HCT116 (cell line): ENCODE measurements at regions of chr5 and their contacts with region 1.

Region 1: DNA sequence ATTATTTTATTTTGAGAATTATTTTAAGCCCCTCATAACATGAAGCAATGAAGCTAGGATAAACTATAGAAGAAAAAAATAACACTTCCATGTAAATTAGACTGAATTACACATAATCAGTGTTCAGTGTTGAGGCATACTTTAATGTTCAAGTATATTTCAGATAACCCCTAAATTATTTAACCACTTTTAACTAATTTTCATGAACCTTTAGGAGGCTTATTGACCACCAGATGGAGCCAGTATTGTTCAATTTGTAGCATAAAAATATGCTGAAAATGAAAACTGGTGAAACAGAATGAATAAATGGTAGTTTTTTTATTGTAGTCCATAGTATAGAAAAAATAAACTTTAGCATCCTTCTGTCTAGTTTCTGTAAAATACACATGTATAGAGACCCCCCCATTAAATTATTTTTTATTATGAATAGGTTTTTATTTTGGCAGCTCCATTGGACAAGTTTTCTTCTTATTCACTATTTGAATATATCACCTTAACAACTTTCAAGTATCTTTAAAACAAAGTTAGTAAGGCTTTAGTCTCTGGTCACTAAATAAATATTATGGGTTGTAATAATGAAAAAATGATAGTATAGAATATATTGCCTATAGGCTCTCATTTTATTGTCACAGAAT is 190.1 kb downstream of the CWC27 start:
- DNase-seq: peak; percentile 7
- ATAC-seq: no peak
- H3K4me3 ChIP-seq: no peak overlapping the region
- H3K27ac ChIP-seq: no peak overlapping the region
- H3K4me1 ChIP-seq: no peaks in the 10 kb centered on the region
- H3K27me3 ChIP-seq: no peaks in the 10 kb centered on the region
- CTCF ChIP-seq: peak; percentile 38 to 57 (median 50); a peak in 5 of 6 replicates
- POLR2A ChIP-seq: no peak
- RAD21 ChIP-seq: peak; percentile 57

Region 2: DNA sequence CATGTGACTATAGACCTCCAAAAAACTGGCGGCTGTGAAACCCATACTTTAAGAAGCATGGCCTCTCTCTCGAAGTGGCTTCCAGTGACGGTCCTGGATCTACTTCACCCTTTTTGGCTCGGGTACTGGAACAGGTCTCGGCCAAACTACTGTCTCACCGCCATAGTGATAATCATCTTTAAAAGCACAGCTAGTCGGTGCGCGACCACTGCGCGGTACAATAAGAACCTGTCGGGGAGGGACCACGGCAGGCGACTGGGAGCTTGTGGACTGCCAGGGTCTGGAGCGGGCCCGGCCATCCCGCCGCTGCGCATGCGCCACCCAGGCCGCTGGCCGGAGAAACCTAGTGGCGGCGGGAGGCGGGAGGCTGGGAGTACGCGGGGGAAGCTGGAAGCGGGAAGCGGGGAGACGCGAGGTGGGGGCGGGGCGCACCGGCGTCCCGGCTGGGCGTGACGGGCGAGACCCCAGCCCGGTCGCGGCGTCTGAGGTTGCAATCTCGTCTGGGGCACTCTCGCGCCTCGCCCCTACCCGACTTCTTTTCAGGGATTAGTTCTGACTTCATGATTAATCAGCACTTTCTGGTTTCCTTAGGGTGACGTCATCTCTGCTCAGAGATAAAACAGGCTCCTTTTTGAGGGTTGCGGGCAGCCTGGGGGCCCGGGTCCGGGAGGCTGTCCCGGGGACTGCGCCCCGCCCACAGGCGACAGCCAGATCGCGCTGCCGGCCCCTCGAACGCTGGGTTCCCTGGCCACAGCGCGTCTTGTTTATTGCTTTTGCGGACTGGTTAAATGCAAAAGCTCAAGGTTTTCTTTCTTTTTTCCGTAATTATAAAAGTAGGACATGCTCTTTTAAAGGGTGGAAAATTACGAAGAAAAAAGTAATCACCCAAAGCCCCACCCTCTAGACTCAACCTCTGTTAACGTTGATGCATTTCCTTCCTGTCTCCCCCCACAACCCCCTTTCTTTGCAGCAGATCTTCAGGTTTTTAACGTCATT is 76.6 kb after region 1 on chr5:
- CTCF ChIA-PET with region 1: no interaction called
- POLR2A ChIA-PET with region 1: no interaction called
- RAD21 ChIA-PET with region 1: no interaction called
- intact Hi-C with region 1: loop called (anchors 5 kb)
- DNase-seq: peak; percentile 69
- ATAC-seq: peak; percentile 91
- H3K4me3 ChIP-seq: peak overlapping the region; percentile 50 to 60
- H3K27ac ChIP-seq: peak overlapping the region; percentile 58
- H3K4me1 ChIP-seq: peaks cover 4 to 27% of the 10 kb centered on the region in 2 experiments; a peak in 2 of 4 replicates
- H3K27me3 ChIP-seq: no peaks in the 10 kb centered on the region
- CTCF ChIP-seq: no peak
- POLR2A ChIP-seq: peak; percentile 70
- RAD21 ChIP-seq: no peak